Lower leg skin (tissue), 4 donors: ENCODE measurements at regions of chr6 and their contacts with region 1.

Region 1: DNA sequence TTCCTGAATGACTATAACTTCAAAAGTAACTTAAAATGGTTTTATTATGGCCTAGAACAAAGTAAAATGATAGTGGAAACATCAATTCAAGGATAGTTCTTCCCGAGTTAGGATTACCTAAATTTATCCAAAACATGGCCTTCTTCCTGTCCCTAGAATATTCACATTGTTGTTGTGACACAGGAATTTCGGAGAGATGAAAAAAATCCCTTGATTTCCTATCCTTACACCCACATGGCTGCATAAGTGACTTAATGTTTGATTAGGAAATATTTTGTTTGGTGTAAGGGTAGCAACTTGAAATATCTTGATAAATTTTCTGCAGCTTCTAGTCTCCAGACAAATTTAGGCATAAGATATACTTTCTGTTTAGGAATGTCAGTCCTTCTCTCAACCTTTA is 27.8 kb downstream of the ZNF451 start:
- DNase-seq: no peak
- H3K4me3 ChIP-seq: no peak overlapping the region
- CTCF ChIP-seq: no peak
- POLR2A ChIP-seq: no peak

Region 2: GRCh38 chr6:57104336-57104735 is 13.5 kb before region 1 on chr6:
- intact Hi-C with region 1: loop called (anchors 1 kb)
- DNase-seq: no peak
- H3K4me3 ChIP-seq: no peak overlapping the region
- CTCF ChIP-seq: no peak
- POLR2A ChIP-seq: no peak

Region 3: GRCh38 chr6:57242505-57242904 is 124.7 kb after region 1 on chr6:
- intact Hi-C with region 1: no loop called
- DNase-seq: no peak
- H3K4me3 ChIP-seq: no peak overlapping the region
- CTCF ChIP-seq: no peak
- POLR2A ChIP-seq: no peak